Ascending aorta (tissue), 2 donors: ENCODE measurements at regions of chr1 and their contacts with region 1.

Region 1: GRCh38 chr1:86965012-86965826 is 50.8 kb downstream of the HS2ST1 start:
- DNase-seq: no peak
- H3K4me3 ChIP-seq: no peak overlapping the region
- H3K27ac ChIP-seq: no peak overlapping the region
- H3K4me1 ChIP-seq: no peaks in the 10 kb centered on the region
- H3K27me3 ChIP-seq: no peaks in the 10 kb centered on the region
- CTCF ChIP-seq: peak in 2 of 3 experiments; percentile 48 to 73

Region 2: GRCh38 chr1:86380257-86380861 is 584.9 kb before region 1 on chr1:
- intact Hi-C with region 1: loop called (anchors 10 kb)
- DNase-seq: no peak
- H3K4me3 ChIP-seq: no peak overlapping the region
- H3K27ac ChIP-seq: no peak overlapping the region
- H3K4me1 ChIP-seq: peaks cover 0 to 3% of the 10 kb centered on the region in 2 donors
- H3K27me3 ChIP-seq: no peaks in the 10 kb centered on the region
- CTCF ChIP-seq: peak; percentile 60 to 77 (median 66)

Region 3: DNA sequence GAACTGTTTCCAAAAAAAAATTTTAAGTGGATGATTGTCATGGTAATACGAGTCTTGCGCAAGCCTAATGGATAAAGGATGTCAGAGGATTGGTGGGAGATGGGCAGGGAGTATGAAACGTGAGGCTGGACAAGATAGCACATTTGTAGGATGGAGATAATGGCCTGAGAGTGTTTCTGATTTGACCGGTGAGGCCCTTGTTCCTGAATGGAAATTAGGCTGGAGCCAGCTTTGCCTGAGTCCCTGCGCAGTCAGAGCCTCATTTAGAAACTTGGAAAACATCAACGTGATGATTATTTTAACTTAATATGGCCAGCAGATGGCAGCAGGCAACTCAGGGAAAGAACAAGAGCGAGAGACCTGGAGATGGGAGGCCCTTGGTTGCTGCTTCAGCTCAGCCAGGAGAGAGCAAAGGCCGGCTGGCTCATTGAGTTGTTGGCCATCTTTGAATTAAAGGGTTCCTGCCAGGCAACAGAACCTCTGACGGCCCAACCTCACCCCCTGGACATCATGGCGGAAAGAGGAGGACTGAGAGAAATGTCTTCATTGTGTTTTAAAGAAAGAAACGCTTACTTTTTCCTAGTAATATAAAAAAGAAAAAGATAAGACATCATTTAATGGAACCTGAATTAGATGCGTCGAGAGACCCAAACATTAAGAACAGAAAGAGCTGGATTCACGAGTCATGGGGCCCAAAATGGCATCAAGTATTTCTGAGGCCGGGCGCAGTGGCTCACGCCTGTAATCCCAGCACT is 131.6 kb before region 1 on chr1:
- intact Hi-C with region 1: loop called (anchors 2 kb)
- DNase-seq: peak in 1 of 2 donors; percentile 83
- H3K4me3 ChIP-seq: no peak overlapping the region
- H3K27ac ChIP-seq: no peak overlapping the region
- H3K4me1 ChIP-seq: no peaks in the 10 kb centered on the region
- H3K27me3 ChIP-seq: no peaks in the 10 kb centered on the region
- CTCF ChIP-seq: peak in 2 of 3 experiments; percentile 48 to 70